Activated CD4-positive, alpha-beta memory T cell treated with anti-CD3 and anti-CD28 coated beads, Interleukin-2, amount 10 ng/mL, durations not matched to agents 7 days and 5 days (primary cell): ENCODE measurements at regions of chr5 and their contacts with region 1.

Region 1: DNA sequence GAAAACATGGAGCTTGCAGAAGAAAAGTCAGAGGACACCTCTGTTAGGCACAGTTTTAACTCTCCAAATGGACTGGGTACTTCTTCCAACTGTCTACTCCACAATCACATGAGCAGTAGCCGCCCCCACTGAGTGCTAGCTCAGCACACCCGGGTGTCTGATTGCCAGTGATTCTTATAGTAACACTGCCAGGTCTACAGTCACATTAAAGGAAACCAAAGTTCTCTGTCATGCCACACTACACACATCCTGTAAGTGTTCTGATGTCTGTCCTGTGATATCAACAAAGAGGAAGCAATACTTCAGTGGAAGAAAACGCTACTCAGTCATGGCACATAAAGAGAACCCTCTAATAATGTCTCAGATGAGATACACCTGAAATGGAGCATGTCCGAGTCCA is at the start of gene HAVCR2:
- DNase-seq: peak; percentile 82
- H3K4me3 Mint-ChIP-seq: peak within 1 kb of the TSS; percentile 88
- H3K27ac Mint-ChIP-seq: peak within 1 kb of the TSS; percentile 96
- H3K4me1 Mint-ChIP-seq: peaks cover 70% of the 10 kb centered on the region
- H3K27me3 Mint-ChIP-seq: no peaks in the 10 kb centered on the region
- total RNA-seq, gene HAVCR2: 62.4 to 66.9 TPM

Region 2: GRCh38 chr5:156920042-156920860 is 188.7 kb before region 1 on chr5:
- CTCF ChIA-PET with region 1: no interaction called
- POLR2A ChIA-PET with region 1: interaction called, 12 read pairs
- DNase-seq: peak; percentile 59
- H3K4me3 Mint-ChIP-seq: peak overlapping the region; percentile 30
- H3K27ac Mint-ChIP-seq: peak overlapping the region; percentile 65
- H3K4me1 Mint-ChIP-seq: peaks cover 49% of the 10 kb centered on the region
- H3K27me3 Mint-ChIP-seq: no peaks in the 10 kb centered on the region

Region 3: GRCh38 chr5:157063776-157064430 is 45.1 kb before region 1 on chr5:
- CTCF ChIA-PET with region 1: no interaction called
- POLR2A ChIA-PET with region 1: no interaction called
- DNase-seq: no peak
- H3K4me3 Mint-ChIP-seq: no peak overlapping the region
- H3K27ac Mint-ChIP-seq: no peak overlapping the region
- H3K4me1 Mint-ChIP-seq: no peaks in the 10 kb centered on the region
- H3K27me3 Mint-ChIP-seq: no peaks in the 10 kb centered on the region

Region 4: DNA sequence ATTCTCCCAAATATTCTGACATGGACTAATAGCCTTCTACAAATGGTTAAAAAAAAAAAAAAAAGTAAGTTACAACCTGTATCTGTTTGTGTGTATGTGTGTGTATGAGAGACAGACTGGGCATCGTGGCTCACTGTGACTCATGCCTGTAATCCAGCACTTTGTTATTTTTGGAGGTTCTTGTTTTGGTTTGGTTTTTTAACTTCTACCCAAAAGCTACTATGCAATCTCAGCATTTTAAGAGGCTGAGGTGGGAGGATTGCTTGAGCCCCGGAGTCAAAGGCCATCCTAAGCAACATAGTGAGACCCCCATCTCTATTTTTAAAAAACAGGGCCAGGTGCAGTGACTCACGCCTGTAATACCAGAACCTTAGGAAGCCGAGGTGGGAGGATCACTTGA is 32.4 kb before region 1 on chr5:
- CTCF ChIA-PET with region 1: interaction called, 4 read pairs
- POLR2A ChIA-PET with region 1: interaction called, 15 read pairs
- DNase-seq: peak; percentile 38
- H3K4me3 Mint-ChIP-seq: no peak overlapping the region
- H3K27ac Mint-ChIP-seq: peak overlapping the region; percentile 50
- H3K4me1 Mint-ChIP-seq: peaks cover 52% of the 10 kb centered on the region
- H3K27me3 Mint-ChIP-seq: no peaks in the 10 kb centered on the region

Region 5: GRCh38 chr5:157130925-157131324 is 21.9 kb after region 1 on chr5:
- CTCF ChIA-PET with region 1: interaction called, 17 read pairs
- POLR2A ChIA-PET with region 1: interaction called, 7 read pairs
- DNase-seq: no peak
- H3K4me3 Mint-ChIP-seq: no peak overlapping the region
- H3K27ac Mint-ChIP-seq: no peak overlapping the region
- H3K4me1 Mint-ChIP-seq: peaks cover 26% of the 10 kb centered on the region
- H3K27me3 Mint-ChIP-seq: peaks cover 2% of the 10 kb centered on the region